ENCODE measurements at regions of chr6 and their contacts with region 1.

Region 1: GRCh38 chr6:159104163-159104925 is 59.6 kb upstream of the TAGAP start:
- DNase-seq: no peak
- ATAC-seq: peak; percentile 83 to 84
- H3K4me3 ChIP-seq: no peak overlapping the region
- H3K27ac ChIP-seq: no peak overlapping the region
- H3K4me1 ChIP-seq: peaks cover 4 to 7% of the 10 kb centered on the region in 2 donors
- H3K27me3 ChIP-seq: no peaks in the 10 kb centered on the region
- CTCF ChIP-seq: peak; percentile 48 to 84 (median 66)
- POLR2A ChIP-seq: no peak

Region 2: DNA sequence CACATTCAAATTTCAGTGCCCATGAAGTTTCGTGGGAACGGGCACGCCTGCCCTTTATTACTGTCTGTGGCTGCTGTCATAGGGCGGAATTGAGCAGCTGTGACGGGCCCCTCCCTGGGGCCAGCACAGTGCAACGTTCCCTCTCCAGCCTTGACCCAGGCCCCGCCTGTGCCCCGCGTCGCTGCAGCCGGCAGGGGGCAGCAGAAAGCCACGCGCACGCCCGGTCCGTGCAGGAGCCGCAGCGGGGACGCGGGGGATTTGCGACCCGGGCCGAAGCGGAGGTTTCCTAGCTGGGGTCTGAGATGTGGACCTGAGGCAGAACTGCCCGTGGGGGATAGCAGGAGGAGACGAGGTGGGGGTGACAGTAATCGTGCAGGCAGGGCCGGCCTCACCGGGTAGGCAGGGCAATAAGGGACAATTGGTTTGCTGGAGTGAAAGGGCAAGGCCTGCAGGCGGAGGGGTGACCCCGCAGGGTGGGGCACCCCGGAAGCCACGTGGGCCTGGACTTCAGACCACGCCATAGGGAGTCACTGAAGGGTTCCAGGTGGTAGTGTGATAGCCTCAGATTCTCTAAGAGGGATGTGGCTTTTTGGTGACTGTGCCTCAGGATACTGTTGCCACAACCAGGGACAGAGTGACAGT is 400.0 kb before region 1 on chr6:
- in situ Hi-C with region 1: loop called in 3 of 4 experiments (anchors 25 kb)
- intact Hi-C with region 1: loop called (anchors 10 kb)
- DNase-seq: peak; percentile 41 to 73
- ATAC-seq: peak; percentile 71 to 74
- H3K4me3 ChIP-seq: peak overlapping the region; percentile 37 to 58 (median 46)
- H3K27ac ChIP-seq: peak overlapping the region in 1 of 4 donors; percentile 43
- H3K4me1 ChIP-seq: peaks cover 18 to 24% of the 10 kb centered on the region in 2 donors
- H3K27me3 ChIP-seq: no peaks in the 10 kb centered on the region
- CTCF ChIP-seq: peak in 4 of 5 experiments; percentile 91 to 99 (median 94)
- POLR2A ChIP-seq: no peak

Region 3: DNA sequence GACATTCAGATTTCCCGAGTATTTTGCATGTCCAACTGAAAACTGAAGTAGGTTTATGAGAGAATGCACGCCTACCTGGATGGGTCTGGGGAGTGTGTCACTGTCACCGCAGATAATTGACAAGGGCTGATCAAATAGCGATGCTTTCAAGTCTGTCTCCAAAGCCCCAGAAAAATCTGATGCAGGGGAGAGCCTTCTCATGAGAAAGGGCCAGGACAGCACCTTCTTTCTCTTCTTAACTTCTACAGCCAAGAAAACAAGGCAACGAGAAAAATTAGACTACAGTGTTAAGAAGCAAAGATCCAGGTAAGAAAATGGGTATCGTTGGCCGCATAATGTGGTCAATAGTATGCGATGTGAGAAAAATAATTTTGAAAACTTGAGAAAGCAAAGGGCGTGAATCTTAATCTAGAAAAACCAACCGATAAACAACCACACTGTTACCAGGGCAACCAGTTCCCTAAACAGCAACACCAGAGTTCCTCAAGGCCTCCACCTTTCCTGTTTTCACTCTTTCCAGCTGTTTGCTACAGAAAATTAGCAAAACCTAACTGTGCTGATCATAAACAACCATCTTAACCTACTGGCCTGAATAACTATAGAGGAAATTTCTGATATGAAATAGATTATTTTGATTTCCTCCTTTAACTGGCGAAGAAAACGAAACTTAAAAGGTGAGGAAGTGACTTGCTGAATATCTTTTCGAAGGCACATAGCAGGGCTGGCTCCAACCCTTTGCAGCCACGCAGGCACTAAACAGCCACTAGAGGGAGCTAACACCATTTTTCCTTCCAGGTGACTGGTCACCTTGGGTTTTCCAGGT is 62.1 kb before region 1 on chr6:
- in situ Hi-C with region 1: loop called in 1 of 4 experiments (anchors 10 kb)
- intact Hi-C with region 1: loop called (anchors 1 kb)
- DNase-seq: peak; percentile 30 to 53
- ATAC-seq: peak; percentile 82 to 87
- H3K4me3 ChIP-seq: peak overlapping the region in 1 of 4 donors; percentile 13
- H3K27ac ChIP-seq: no peak overlapping the region
- H3K4me1 ChIP-seq: peaks cover 0 to 4% of the 10 kb centered on the region in 2 donors
- H3K27me3 ChIP-seq: no peaks in the 10 kb centered on the region
- CTCF ChIP-seq: peak; percentile 76 to 93 (median 79)
- POLR2A ChIP-seq: no peak

Region 4: GRCh38 chr6:160051390-160051789 is 947.0 kb after region 1 on chr6:
- in situ Hi-C with region 1: no loop called
- intact Hi-C with region 1: no loop called
- DNase-seq: no peak
- ATAC-seq: no peak
- H3K4me3 ChIP-seq: no peak overlapping the region
- H3K27ac ChIP-seq: no peak overlapping the region
- H3K4me1 ChIP-seq: no peaks in the 10 kb centered on the region
- H3K27me3 ChIP-seq: no peaks in the 10 kb centered on the region
- CTCF ChIP-seq: no peak
- POLR2A ChIP-seq: no peak